ENCODE measurements at regions of chr18 and their contacts with region 1.

Region 1: DNA sequence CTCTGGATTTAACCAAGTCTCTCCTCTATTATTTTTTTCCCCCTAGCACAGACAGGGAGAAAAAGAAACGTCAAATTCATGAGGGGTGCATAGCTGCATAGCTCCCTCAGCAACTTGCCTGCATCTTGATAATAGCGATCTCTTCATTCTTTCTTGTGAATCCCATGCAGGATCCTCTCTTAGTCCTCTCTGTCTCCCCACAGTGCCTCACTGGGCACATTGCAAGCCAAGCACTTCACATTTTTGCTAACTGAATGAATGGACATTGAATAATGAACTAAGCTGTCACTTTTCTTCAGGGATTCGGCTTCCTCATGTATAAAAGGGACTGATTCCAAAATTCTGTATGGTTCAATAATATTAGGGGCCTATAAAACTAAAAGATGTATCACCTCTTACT is 2.9 kb upstream of the EPB41L3 start:
- DNase-seq: peak; percentile 48 to 76 (median 61)
- H3K4me3 ChIP-seq: no peak overlapping the region
- H3K27ac ChIP-seq: no peak overlapping the region
- H3K4me1 ChIP-seq: peaks cover 0 to 16% of the 10 kb centered on the region in 2 donors
- H3K27me3 ChIP-seq: no peaks in the 10 kb centered on the region
- CTCF ChIP-seq: peak; percentile 22 to 85 (median 68)
- POLR2A ChIP-seq: no peak

Region 2: DNA sequence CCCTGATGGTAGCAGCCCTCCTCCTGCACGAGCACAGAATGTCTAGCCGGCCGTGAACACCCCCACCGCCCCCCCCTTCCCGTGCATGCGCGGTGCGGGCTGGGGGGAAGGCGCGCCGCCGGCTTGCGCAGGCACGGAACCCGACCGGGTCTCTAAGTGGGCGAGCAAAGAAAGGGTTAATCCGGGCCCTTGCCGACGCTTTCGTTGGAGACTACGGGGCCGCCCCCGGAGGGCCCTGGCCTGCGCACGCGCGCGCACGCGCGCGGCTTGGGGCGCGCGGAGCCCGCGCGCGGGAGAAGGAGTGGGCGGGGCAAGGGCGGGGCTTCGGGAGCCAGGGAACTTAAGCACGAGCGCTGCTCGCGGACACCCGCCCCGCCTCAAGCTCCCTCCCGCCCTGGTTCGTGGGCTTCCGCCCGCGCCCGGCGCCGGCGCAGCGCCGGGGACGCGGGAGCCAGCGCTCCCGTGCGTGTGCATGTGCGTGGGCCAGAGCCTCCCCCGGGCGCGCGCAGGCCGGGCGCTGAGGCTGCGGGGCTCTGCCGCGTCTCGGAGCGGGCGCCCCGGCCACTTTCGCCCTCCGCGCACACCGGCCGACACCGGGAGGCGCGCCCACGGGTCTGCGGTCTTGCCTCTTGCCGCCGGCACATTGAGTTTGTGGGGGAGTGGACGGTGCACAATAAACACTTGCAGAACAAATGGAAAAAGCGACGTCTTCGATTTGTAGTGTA is 250.5 kb before region 1 on chr18:
- intact Hi-C with region 1: loop called in 1 of 2 experiments (anchors 10 kb)
- DNase-seq: peak; percentile 95 to 98 (median 96)
- H3K4me3 ChIP-seq: peak overlapping the region; percentile 66 to 99 (median 90)
- H3K27ac ChIP-seq: peak overlapping the region; percentile 94 to 99 (median 99)
- H3K4me1 ChIP-seq: peaks cover 0 to 19% of the 10 kb centered on the region in 2 donors
- H3K27me3 ChIP-seq: no peaks in the 10 kb centered on the region
- CTCF ChIP-seq: peak in 1 of 6 experiments; percentile 3
- POLR2A ChIP-seq: peak; percentile 85 to 88

Region 3: DNA sequence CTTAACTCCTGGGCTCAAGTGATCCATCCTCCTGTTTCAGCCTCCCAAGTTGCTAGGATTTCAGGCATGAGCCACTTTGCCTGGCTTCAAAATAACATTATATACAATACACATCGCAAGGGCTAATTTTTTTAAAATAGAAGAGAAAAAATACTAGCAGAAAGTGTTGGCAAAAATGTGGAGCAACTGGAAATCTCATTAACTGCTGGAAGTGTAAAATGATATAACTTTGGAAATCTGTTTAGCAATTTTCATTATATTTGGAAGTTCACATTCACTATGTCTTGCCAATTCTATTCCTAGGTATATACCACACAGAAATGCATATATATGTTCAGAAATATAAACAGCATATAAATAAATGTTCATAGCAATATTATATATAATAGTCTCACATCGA is 196.0 kb before region 1 on chr18:
- intact Hi-C with region 1: no loop called
- DNase-seq: no peak
- H3K4me3 ChIP-seq: no peak overlapping the region
- H3K27ac ChIP-seq: no peak overlapping the region
- H3K4me1 ChIP-seq: no peaks in the 10 kb centered on the region
- H3K27me3 ChIP-seq: no peaks in the 10 kb centered on the region
- CTCF ChIP-seq: no peak
- POLR2A ChIP-seq: no peak

Region 4: DNA sequence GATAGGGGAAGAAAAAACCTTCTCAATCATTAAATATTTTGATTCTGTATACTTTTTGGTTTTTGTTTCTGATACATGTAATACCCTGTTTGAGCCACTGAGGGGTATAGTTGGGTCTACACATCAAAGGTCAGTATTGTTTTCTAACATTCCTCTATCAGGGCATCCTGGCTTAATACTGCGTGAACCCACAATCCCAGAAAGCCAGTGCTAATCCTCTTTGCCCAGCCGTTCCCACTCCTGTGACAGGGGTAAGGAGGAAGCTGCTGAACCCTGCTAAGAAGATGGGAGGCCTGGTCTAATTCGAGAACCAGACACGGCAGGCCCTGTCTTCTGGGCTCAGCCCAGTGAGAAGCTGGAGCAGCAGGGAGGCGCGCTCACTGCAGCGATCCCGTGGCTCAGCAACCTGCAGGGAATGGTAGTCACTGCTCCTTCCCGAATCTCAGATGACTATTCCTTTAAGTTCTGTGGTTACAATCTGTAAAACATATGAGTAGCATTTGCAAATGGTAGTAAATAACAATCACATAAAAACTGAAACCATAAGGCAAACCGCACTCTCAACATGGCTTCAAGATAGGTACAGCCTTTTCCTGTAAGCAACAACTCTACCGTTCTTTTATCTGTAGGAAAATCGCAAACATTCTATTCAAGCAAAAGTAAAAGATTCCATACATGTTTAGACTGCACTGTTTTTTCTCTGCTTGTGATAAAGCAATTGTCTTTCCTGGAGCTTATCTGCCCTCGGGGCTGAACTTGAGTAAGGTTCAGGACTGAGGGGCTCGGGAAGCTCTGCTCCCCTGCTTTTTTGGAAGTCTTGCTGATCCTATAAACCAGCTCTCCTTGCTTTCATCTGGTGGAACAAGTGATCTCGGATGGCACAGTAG is 89.8 kb before region 1 on chr18:
- intact Hi-C with region 1: loop called (anchors 5 kb)
- DNase-seq: peak in 6 of 7 donors; percentile 23 to 67 (median 37)
- H3K4me3 ChIP-seq: peak overlapping the region in 1 of 4 donors; percentile 25
- H3K27ac ChIP-seq: peak overlapping the region in 3 of 5 donors; percentile 42 to 70 (median 64)
- H3K4me1 ChIP-seq: peaks cover 12 to 24% of the 10 kb centered on the region in 2 donors
- H3K27me3 ChIP-seq: no peaks in the 10 kb centered on the region
- CTCF ChIP-seq: peak; percentile 44 to 77 (median 61)
- POLR2A ChIP-seq: no peak

Region 5: DNA sequence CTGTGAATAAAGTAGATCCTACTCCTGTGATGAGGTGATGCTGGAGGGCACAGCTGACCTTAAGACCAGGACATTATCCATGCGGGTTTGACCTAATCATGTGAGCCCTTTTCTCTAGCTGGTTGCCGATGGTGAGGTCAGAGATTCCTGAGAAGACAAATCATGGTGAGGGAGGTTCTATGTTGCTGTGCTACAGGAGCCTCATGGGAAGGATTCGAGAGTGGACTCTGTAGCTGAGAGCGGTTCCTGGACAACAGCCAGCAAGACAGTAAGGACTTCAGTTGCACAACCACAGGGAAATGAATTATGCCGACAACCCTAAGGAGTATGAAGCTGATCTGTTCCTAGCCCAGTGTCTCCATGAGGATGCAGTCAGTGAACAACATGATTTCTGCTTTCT is 83.3 kb before region 1 on chr18:
- intact Hi-C with region 1: loop called (anchors 5 kb)
- DNase-seq: peak in 6 of 7 donors; percentile 54 to 80 (median 69)
- H3K4me3 ChIP-seq: no peak overlapping the region
- H3K27ac ChIP-seq: peak overlapping the region in 2 of 5 donors; percentile 10 to 74
- H3K4me1 ChIP-seq: peaks cover 8 to 39% of the 10 kb centered on the region in 2 donors
- H3K27me3 ChIP-seq: no peaks in the 10 kb centered on the region
- CTCF ChIP-seq: no peak
- POLR2A ChIP-seq: no peak

Region 6: DNA sequence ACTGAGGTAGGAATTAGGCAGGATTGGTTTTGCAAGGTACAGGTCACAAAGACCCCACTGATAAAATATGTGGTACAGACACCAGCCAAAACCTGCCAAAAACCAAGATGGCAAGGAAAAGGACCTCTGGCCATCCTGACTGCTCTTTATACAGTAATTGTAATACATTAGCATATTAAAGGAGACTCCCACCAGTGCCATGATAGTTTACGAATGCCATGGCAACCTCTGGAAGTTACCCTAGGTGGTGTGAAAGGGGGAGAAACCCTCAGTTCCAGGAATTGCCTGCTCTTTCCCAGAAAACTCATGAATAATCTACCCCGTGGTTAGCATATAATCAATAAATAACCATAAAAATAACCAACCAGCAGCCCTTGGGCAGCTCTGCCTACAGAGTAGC is 126.9 kb after region 1 on chr18:
- intact Hi-C with region 1: no loop called
- DNase-seq: no peak
- H3K4me3 ChIP-seq: no peak overlapping the region
- H3K27ac ChIP-seq: no peak overlapping the region
- H3K4me1 ChIP-seq: no peaks in the 10 kb centered on the region
- H3K27me3 ChIP-seq: no peaks in the 10 kb centered on the region
- CTCF ChIP-seq: no peak
- POLR2A ChIP-seq: no peak

Region 7: DNA sequence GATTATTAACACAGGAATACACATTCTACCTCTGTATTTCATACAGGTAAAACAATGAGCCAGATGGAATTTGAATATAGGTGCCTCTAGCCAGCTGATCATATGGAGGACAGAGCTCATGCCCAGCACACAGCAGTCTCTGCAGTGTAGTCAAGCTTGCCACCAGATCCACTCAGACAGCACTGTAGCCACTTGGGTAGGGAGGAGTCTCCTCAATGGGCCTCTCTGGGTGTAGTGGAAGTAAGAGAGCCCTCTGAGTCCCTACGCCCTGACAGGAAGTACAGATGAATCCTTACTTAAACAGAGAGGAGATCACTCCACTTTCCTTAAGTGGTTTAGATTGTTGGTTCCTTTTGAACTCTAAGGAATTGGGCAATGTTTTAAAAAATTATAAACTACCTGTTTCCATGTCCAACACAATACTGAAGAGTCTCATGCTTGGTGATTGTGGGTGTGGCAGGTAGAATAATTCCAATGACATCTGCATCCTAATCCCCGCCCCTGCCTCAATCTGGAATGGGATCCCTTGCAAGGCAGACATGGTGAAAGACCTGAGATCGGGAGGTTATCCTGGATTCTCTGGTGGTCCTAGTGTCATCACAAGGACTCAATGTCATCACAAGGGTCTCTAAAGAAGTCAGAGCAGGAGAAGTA is 371.7 kb after region 1 on chr18:
- intact Hi-C with region 1: no loop called
- DNase-seq: no peak
- H3K4me3 ChIP-seq: no peak overlapping the region
- H3K27ac ChIP-seq: no peak overlapping the region
- H3K4me1 ChIP-seq: no peaks in the 10 kb centered on the region
- H3K27me3 ChIP-seq: no peaks in the 10 kb centered on the region
- CTCF ChIP-seq: no peak
- POLR2A ChIP-seq: no peak

Measured in adrenal gland (tissue), 19 donors.